Activated CD4-positive, alpha-beta memory T cell treated with anti-CD3 and anti-CD28 coated beads for 36 hours (primary cell): ENCODE measurements at regions of chr13 and their contacts with region 1.

Region 1: DNA sequence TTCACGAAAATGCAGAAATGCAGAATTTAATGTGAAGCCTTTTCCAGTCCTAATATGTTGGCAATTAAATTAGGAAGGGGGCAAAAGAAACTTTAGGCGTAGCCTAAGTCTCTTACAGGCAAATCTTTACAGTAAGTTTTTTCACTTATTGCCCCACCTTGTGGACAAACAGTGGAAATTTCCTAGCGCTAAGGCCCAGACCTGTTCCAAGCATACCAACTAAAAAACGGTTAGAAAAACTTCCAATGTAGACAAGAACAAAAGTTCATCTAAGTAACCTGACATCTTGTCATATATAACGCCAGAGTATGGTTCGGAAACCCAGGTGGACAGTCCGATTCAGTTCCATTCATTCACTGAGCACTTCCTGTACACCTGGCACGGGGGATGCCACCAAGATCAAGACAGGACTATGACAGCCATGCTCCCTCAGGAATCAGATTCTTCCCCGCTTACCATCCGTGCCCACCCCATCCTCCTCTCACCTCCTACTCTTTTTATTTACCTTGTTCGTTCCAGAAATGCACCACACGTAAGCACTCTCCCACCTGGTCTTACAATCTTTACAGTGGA is 4.9 kb downstream of the ZAR1L start:
- DNase-seq: peak; percentile 17
- H3K4me3 Mint-ChIP-seq: no peak overlapping the region
- H3K27ac Mint-ChIP-seq: no peak overlapping the region
- H3K4me1 Mint-ChIP-seq: peaks cover 15% of the 10 kb centered on the region
- H3K27me3 Mint-ChIP-seq: no peaks in the 10 kb centered on the region

Region 2: DNA sequence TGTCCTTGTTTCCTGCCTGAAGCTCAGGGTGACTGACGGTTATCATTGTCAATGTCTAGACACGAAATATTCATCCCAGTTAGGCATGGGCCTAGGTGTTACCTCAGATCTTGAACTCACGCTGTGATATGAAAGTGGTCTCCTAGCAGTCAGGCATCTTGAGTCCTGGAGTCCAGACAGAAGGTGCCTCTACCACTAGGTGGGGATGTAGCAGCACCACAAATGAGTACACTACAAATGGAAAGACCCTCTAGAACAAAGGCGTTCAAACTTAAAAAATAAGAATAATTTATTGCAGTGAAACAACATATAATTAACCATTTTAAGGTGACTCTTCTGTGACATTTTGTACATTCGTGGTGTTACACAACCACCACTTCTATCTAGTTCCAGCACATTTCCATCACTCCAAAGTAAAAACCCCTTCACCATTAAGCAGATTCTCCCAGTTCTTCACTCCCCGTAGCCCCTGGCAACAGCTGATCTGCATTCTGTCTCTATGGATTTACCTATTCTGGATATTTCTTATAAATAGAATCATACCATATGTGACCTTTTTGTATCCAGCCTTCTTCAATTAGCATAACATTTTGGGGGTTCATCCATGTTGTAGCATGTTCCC is 290.5 kb before region 1 on chr13:
- CTCF ChIA-PET with region 1: no interaction called
- POLR2A ChIA-PET with region 1: no interaction called
- intact Hi-C with region 1: loop called (anchors 5 kb)
- DNase-seq: peak; percentile 37
- H3K4me3 Mint-ChIP-seq: no peak overlapping the region
- H3K27ac Mint-ChIP-seq: no peak overlapping the region
- H3K4me1 Mint-ChIP-seq: no peaks in the 10 kb centered on the region
- H3K27me3 Mint-ChIP-seq: no peaks in the 10 kb centered on the region

Region 3: DNA sequence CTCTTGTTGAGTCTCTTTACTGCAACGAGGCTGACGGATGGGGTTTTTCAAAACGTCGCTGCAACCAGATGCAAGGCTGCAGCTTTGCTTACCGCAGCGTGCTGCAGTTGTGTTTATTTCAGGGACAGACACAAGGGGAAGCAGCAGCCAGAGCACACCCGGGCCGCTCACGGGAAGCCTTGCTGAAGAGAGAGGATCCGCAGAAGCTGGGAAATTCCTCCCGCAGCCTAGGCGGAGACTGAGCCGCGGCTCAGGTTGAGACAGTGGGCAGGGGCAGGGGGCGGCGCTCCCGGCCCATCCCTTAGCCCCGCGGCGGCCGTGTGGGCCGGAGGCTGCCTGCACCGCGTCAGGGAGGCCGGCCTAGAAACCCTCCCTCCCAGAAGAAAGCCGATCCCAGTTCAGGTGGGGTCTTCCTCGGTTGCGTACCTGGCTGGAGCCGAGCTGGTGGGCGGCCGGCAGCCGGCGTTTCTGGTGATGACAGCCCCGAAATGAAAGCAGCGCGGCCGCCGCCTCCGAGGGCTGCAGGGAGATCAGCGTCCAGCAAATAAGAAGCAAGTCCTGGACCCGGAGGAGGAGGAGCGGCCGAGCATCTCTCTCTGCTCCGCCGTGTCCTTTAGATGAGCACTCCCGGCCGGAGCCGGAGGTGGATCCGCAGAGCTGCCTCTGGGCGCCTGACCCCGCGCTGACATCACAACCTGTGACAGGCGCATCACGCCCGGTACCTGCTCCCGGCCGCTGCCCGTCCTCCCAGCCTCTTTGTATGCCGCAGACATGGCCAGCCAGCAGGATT is 279.0 kb before region 1 on chr13 and contains the start of gene FRY:
- CTCF ChIA-PET with region 1: no interaction called
- POLR2A ChIA-PET with region 1: no interaction called
- intact Hi-C with region 1: loop called (anchors 2 kb)
- DNase-seq: peak; percentile 69
- H3K4me3 Mint-ChIP-seq: peak within 1 kb of the TSS; percentile 88
- H3K27ac Mint-ChIP-seq: peak within 1 kb of the TSS; percentile 53
- H3K4me1 Mint-ChIP-seq: peaks cover 25% of the 10 kb centered on the region
- H3K27me3 Mint-ChIP-seq: peaks cover 4% of the 10 kb centered on the region
- total RNA-seq, gene FRY: 4.4 to 5.3 TPM

Region 4: GRCh38 chr13:32045982-32046785 is 264.0 kb before region 1 on chr13:
- CTCF ChIA-PET with region 1: no interaction called
- POLR2A ChIA-PET with region 1: no interaction called
- intact Hi-C with region 1: no loop called
- DNase-seq: no peak
- H3K4me3 Mint-ChIP-seq: peak overlapping the region; percentile 50
- H3K27ac Mint-ChIP-seq: peak overlapping the region; percentile 82
- H3K4me1 Mint-ChIP-seq: peaks cover 57% of the 10 kb centered on the region
- H3K27me3 Mint-ChIP-seq: no peaks in the 10 kb centered on the region

Region 5: GRCh38 chr13:32246468-32246867 is 63.8 kb before region 1 on chr13:
- CTCF ChIA-PET with region 1: interaction called, 25 read pairs
- POLR2A ChIA-PET with region 1: no interaction called
- intact Hi-C with region 1: loop called (anchors 1 kb)
- DNase-seq: peak; percentile 61
- H3K4me3 Mint-ChIP-seq: no peak overlapping the region
- H3K27ac Mint-ChIP-seq: no peak overlapping the region
- H3K4me1 Mint-ChIP-seq: no peaks in the 10 kb centered on the region
- H3K27me3 Mint-ChIP-seq: no peaks in the 10 kb centered on the region

Region 6: GRCh38 chr13:32267836-32268439 is 42.3 kb before region 1 on chr13:
- CTCF ChIA-PET with region 1: interaction called, 18 read pairs
- POLR2A ChIA-PET with region 1: interaction called, 4 read pairs
- intact Hi-C with region 1: loop called (anchors 1 kb)
- DNase-seq: peak; percentile 69
- H3K4me3 Mint-ChIP-seq: no peak overlapping the region
- H3K27ac Mint-ChIP-seq: no peak overlapping the region
- H3K4me1 Mint-ChIP-seq: peaks cover 6% of the 10 kb centered on the region
- H3K27me3 Mint-ChIP-seq: no peaks in the 10 kb centered on the region

Region 7: DNA sequence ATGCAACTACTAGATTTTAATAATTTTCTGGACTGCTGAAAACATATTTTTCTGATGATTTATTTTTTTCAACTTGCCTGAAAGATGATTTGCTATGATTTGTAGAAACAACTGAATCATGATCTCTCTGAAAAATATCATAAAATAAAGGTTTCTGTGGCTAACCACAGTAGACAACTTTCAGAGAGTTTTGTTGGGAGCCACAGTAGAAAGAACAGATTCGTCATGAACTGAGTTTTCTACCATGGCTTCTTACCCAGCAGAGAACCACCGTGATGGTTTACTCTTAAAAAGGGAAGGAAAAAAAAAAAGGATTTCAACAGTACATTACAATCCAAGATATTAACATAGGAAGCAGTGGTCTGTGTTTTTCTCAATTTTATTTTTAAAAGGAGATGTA is 13.0 kb before region 1 on chr13:
- CTCF ChIA-PET with region 1: interaction called, 4 read pairs
- POLR2A ChIA-PET with region 1: interaction called, 11 read pairs
- intact Hi-C with region 1: loop called (anchors 1 kb)
- DNase-seq: no peak
- H3K4me3 Mint-ChIP-seq: no peak overlapping the region
- H3K27ac Mint-ChIP-seq: no peak overlapping the region
- H3K4me1 Mint-ChIP-seq: peaks cover 20% of the 10 kb centered on the region
- H3K27me3 Mint-ChIP-seq: peaks cover 7% of the 10 kb centered on the region